GM10248 (cell line): ENCODE measurements at regions of chr6 and their contacts with region 1.

Region 1: DNA sequence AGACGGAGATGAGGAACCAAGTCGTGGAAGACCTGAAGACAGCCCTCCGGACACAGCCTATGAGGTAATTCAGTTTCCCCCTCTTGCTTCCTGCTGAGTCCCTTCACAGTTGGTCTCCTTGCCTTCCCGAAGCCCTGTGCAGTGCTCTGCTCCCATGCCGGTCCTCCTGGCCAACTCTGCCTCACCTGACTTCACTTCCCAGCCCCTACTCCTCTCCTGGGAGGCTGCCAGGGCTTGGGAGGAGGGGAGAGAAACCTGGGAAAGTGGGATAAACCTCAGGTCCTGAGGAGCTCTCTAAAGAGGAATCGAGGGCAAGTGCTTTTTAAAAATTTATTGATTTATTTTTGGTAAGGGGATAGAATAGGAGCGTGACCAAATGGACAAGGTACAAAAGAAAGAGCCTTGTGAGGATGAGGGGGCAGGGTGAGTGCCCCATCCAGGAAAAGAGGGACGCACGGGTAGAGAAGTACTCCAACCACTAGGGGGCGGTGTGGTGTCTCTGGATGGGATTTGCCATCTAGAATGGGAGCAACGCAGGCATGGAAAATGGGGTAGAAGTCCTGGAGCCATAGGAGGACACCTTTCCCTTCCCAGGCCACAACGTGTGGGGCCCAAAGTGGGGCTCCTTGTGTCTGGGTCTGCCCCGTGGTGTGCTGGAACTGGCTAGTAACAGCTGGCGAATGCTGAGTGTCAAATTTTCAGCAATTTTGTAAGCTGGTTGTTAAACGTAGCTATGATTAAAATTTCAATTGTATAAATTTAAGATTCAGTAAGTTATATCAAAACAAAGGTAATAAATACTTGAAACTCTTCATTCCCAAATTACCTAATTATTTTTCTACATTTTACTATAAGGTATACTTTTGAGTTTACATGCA is 69.0 kb downstream of the MOCS1 start:
- DNase-seq: peak; percentile 75
- CTCF ChIP-seq: peak; percentile 81

Region 2: DNA sequence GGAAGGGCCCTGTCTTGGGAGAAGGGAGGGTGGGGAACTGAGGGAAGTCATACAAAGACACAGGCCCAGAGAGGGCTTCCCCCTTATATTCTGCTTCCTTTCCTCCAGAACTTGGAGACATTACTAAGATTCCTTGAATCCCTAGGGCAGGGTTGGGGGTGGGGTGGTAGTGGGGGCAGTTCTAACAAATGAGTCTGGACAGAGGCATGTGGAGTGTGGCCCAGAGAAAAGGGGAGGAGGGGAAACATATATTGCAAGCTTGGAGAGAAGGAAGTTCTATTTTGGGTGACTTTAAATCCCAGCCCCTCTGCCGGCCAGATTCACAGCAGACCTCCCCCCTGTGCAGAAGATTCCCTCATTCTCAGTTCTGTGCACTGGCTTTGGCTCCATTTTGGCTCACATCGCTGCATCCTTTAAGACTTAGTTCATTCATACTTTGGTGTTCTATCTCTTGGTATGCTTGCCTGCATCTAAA is 29.4 kb before region 1 on chr6:
- CTCF ChIA-PET with region 1: interaction called, 19 read pairs
- POLR2A ChIA-PET with region 1: no interaction called
- DNase-seq: no peak
- CTCF ChIP-seq: no peak

Region 3: DNA sequence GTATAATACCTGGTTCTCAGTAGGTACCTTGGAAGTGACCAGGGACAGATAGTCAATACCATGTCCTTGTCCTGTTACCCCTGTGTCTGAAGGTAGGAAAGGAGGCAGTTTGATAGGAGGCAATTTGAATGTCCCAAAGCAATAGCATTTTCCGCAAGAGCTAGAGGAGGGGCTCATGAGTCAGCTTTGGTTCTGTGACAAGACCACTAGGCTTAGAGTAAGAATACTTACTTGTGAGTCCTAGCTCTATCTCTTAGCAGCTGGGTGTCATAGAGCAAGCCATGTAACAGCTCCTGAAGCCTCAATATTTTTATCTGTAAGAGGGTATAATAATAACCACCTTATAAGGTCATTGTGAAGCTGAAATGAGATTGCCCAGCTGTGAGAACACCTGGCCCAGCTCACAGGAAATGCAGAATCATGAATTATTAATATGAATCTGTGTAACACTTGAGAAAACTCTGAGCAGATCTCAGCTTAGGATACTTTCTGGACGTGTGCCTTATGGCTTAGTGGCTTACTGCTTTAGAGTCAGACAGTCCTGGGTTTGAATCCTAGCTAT is 14.4 kb before region 1 on chr6:
- CTCF ChIA-PET with region 1: interaction called, 54 read pairs
- POLR2A ChIA-PET with region 1: no interaction called
- DNase-seq: no peak
- CTCF ChIP-seq: no peak

Region 4: DNA sequence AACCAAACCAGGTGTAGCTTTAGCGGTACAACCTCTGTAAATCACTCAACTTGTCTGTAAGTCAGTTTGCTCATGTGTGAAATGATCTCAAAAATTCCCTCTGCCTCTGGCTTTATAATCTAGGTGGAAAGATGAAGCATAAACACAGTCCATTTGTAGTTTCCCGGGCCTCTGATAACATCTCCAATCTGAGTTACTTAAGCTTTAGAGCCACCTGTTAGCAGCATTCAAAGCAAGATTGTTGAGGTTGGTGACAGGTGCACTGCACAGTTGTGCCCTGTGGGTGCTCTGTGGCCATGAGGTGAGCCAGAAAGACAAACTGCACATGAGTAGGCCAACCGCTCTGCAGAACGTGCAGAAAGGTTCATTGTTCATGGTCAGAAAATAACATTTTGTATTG is 15.3 kb after region 1 on chr6:
- CTCF ChIA-PET with region 1: interaction called, 23 read pairs
- POLR2A ChIA-PET with region 1: no interaction called
- DNase-seq: no peak
- CTCF ChIP-seq: no peak